ENCODE measurements at regions of chr2 and their contacts with region 1.

Region 1: DNA sequence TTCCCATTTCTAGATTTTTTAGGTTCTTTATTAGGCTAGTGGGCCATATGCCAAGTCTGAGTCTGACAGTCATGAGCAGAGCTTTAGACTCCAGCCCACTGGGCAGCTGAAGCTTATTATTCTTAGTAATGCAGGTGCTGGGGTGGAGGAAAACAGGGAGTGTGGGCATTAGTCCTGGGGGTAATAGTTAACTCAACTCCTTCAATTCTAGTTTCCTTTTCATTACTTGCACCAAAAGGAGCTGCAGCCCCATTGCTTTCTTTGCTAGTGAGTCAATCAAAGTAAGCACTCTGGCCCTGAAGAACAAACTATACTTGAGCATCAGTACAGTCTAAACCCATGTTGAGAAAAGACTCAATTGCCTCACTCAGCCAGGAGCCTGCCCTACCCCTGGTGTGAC is 35.5 kb downstream of the ICOS start:
- DNase-seq: no peak
- H3K4me3 Mint-ChIP-seq: no peak overlapping the region
- H3K27ac Mint-ChIP-seq: no peak overlapping the region
- H3K4me1 Mint-ChIP-seq: peaks cover 13% of the 10 kb centered on the region
- H3K27me3 Mint-ChIP-seq: no peaks in the 10 kb centered on the region

Region 2: GRCh38 chr2:203959672-203960071 is 12.4 kb before region 1 on chr2:
- intact Hi-C with region 1: loop called (anchors 2 kb)
- DNase-seq: no peak
- H3K4me3 Mint-ChIP-seq: no peak overlapping the region
- H3K27ac Mint-ChIP-seq: no peak overlapping the region
- H3K4me1 Mint-ChIP-seq: peaks cover 32% of the 10 kb centered on the region
- H3K27me3 Mint-ChIP-seq: no peaks in the 10 kb centered on the region